Pancreas (tissue), 10 donors: ENCODE measurements at regions of chr9 and their contacts with region 1.

Region 1: GRCh38 chr9:108272349-108272899 is 583.4 kb downstream of the ACTL7B start:
- DNase-seq: peak in 5 of 6 donors; percentile 49 to 72 (median 56)
- ATAC-seq: peak; percentile 85 to 95 (median 89)
- H3K4me3 ChIP-seq: peak overlapping the region in 2 of 4 donors; percentile 31 to 47
- H3K27ac ChIP-seq: peak overlapping the region; percentile 27 to 85 (median 64)
- H3K4me1 ChIP-seq: peaks cover 0 to 12% (median 0%) of the 10 kb centered on the region in 3 donors
- H3K27me3 ChIP-seq: no peaks in the 10 kb centered on the region
- CTCF ChIP-seq: peak in 3 of 4 donors; percentile 48 to 61 (median 49)

Region 2: DNA sequence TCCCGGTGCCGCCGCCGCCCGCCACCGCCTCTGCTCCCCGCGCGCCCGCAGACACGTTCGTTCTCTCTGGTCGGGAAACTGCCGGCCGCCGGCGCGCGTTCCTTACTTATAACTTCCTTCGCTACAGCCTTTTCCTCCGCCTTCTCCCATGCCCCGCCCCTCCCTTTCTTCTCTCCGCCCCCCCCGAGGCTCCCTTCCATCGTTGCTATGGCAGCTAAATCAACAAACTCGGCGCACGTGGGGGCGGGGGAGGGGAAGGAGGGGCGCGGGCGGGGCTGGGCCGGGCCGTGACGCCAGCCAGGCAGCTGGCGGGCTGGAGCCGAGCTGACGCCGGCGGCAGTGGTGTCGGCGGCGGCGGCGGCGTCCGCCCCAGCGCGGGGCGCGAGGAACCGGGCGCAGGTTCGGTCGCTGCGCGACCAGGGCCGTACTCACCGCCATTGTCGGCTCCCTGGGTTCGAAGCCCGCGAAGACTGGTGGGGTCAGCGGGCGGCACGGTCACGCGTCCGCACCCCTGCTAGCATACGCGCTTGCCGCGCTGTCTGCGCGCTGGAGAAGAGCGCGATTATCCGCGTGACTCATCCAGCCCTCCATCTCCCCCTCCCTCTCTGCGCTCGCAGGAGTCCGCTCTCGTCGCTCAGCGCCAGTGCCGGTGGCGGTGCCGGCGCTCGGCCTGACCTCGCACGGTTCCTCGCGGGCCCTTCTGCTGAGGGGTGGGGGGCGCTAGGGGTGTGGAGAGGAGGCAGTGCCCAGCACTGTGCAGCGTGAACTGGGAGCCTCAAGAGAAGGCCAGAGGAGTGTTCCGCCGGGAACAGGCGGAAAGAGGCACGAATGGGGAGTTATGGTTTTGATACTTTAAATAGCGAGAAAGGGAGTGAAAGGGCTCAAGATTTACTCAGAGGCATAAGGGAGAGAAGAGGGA is 782.5 kb before region 1 on chr9 and contains the start of gene KLF4:
- intact Hi-C with region 1: loop called in 1 of 3 experiments (anchors 5 kb)
- DNase-seq: peak; percentile 86 to 93 (median 92)
- ATAC-seq: peak; percentile 77 to 87 (median 84)
- H3K4me3 ChIP-seq: peak within 1 kb of the TSS; percentile 55 to 65 (median 56)
- H3K27ac ChIP-seq: peak within 1 kb of the TSS; percentile 26 to 70 (median 58)
- H3K4me1 ChIP-seq: peaks cover 9 to 14% (median 12%) of the 10 kb centered on the region in 3 donors
- H3K27me3 ChIP-seq: peaks cover 0 to 6% (median 0%) of the 10 kb centered on the region in 4 donors
- CTCF ChIP-seq: no peak
- total RNA-seq, gene KLF4: 3.2 to 9.9 (median 5.6) TPM

Region 3: GRCh38 chr9:108511307-108511706 is 238.9 kb after region 1 on chr9:
- intact Hi-C with region 1: no loop called
- DNase-seq: no peak
- ATAC-seq: no peak
- H3K4me3 ChIP-seq: no peak overlapping the region
- H3K27ac ChIP-seq: no peak overlapping the region
- H3K4me1 ChIP-seq: no peaks in the 10 kb centered on the region
- H3K27me3 ChIP-seq: no peaks in the 10 kb centered on the region
- CTCF ChIP-seq: no peak